Heart left ventricle (tissue), 16 donors: ENCODE measurements at regions of chr7 and their contacts with region 1.

Region 1: DNA sequence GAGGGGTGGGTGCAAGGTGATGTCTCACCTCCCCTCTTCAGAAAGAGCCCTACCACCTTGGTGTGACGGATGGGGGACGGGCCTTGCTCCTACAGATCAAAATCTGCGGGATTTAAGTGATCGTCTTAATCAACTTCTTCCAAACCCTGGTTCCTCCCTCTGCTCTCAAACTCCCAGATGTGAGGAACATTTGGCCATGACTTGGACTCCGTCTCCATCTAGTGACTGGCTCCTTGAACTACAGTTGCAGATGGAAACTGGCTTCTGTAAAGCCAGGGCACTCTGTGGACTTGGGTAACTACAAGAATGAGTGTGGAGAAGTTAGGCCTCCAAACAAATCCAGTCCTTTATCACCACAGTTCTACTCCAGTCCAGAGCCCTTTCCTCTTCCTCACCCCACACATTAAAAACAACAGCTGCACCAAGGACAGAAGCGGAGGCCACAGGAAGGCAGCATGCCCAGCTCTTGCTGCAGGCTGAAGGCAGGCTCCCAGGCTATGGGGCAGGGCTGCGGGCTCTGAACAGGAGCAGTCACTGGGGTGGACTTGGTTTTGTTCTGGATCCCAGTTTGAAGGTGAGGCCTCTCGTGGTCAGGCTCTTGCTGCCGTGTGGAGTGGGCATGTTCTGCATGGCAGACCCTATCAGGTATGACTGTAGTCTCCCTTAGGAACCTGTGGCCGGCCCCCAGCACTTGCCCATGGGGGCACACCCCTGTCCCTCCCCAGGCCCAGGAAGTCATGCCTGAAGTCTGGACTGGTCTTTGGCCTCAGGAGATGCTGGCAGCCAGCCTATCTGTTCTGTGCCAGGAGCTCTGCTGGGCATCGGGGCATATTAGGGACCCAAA is 79.4 kb downstream of the VWC2 start:
- DNase-seq: no peak
- ATAC-seq: peak; percentile 44 to 82 (median 68)
- H3K4me3 ChIP-seq: no peak overlapping the region
- H3K27ac ChIP-seq: peak overlapping the region in 1 of 12 donors; percentile 11
- H3K4me1 ChIP-seq: peaks cover 0 to 24% (median 1%) of the 10 kb centered on the region in 12 donors
- H3K27me3 ChIP-seq: no peaks in the 10 kb centered on the region
- CTCF ChIP-seq: peak; percentile 41 to 73 (median 70)
- POLR2A ChIP-seq: no peak

Region 2: GRCh38 chr7:48299580-48300169 is 1553.2 kb before region 1 on chr7:
- intact Hi-C with region 1: loop called in 2 of 10 experiments (anchors 10 kb)
- DNase-seq: peak in 2 of 5 donors; percentile 30 to 45
- ATAC-seq: peak; percentile 55 to 75 (median 70)
- H3K4me3 ChIP-seq: no peak overlapping the region
- H3K27ac ChIP-seq: no peak overlapping the region
- H3K4me1 ChIP-seq: no peaks in the 10 kb centered on the region
- H3K27me3 ChIP-seq: no peaks in the 10 kb centered on the region
- CTCF ChIP-seq: peak; percentile 51 to 71 (median 62)
- POLR2A ChIP-seq: no peak

Region 3: DNA sequence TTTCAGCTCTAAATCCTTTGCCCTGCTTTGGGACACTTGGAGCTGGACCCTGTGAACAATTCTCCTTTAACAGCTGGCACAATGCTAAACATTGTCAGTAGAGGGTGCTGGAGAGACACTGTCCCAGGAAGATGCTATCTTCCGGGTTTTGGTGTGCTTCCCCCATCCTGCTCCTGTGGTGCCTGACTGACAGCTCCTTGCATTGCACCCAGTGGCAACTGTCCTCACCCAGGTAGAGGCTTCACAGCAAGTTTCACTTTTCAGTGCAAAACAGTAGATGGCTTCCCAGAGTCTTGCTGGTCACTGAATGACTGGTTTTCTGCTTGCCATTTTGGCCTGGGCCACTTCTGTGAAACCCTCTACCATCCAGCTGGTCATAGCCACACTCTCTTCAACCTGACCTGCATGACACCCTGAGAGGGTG is 851.2 kb before region 1 on chr7:
- intact Hi-C with region 1: loop called in 2 of 10 experiments (anchors 5 to 10 kb)
- DNase-seq: peak in 3 of 5 donors; percentile 9 to 20 (median 18)
- ATAC-seq: peak; percentile 32 to 77 (median 68)
- H3K4me3 ChIP-seq: no peak overlapping the region
- H3K27ac ChIP-seq: no peak overlapping the region
- H3K4me1 ChIP-seq: no peaks in the 10 kb centered on the region
- H3K27me3 ChIP-seq: no peaks in the 10 kb centered on the region
- CTCF ChIP-seq: peak; percentile 32 to 62 (median 46)
- POLR2A ChIP-seq: no peak

Region 4: GRCh38 chr7:49483142-49483541 is 369.7 kb before region 1 on chr7:
- intact Hi-C with region 1: loop called in 7 of 10 experiments (anchors 5 to 10 kb)
- DNase-seq: peak in 3 of 5 donors; percentile 10 to 42 (median 28)
- ATAC-seq: peak in 3 of 4 donors; percentile 58 to 89 (median 86)
- H3K4me3 ChIP-seq: no peak overlapping the region
- H3K27ac ChIP-seq: no peak overlapping the region
- H3K4me1 ChIP-seq: peaks cover 0 to 6% (median 0%) of the 10 kb centered on the region in 12 donors
- H3K27me3 ChIP-seq: no peaks in the 10 kb centered on the region
- CTCF ChIP-seq: peak in 9 of 12 donors; percentile 25 to 45 (median 35)
- POLR2A ChIP-seq: no peak